GM10248 (cell line): ENCODE measurements at regions of chr19 and their contacts with region 1.

Region 1: DNA sequence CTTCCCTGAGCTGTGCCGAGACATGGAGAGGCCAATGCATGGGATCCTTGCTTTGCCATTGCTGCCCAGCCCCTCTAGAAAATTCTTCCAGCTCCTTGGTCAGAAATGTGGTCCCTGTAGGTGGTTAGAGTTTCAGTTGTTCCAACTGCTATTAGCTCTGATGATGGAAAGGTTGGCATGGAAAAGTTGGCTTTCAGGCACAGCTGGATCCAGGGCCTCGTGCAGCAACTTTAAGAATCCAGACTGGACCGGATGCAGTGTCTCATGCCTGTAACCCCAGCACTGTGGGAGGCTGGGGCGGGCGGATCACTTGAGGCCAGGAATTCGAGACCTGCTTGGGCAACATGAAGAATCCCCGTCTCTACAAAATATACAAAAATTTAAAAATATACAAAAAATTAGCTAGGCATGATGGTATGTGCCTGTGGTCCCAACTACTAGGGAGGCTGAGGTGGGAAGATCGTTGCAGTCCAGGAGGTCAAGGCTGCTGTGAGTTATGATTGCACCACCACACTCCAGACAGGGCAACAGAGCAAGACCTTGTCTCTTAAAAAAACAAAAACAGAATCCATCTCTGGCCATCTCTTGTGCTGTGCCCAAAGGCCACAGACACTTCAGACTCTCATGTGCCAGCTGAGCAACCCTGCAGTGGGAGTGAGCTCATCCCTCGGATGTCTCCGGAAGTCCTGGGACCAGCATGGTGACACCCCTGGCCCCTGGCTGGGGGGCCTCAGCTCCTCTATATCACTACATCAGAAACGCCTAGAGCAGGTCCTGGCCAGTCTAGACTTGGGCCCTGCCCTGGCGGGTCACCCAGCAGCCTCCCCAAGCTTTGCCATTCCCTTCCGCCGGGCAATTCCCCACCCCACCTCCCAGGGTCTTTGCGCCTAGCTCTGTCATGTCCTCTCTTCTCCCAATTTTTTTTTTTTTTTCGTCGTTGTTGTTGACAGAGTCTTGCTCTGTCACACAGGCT is 16.8 kb downstream of the MEX3D start:
- DNase-seq: no peak
- CTCF ChIP-seq: no peak

Region 2: DNA sequence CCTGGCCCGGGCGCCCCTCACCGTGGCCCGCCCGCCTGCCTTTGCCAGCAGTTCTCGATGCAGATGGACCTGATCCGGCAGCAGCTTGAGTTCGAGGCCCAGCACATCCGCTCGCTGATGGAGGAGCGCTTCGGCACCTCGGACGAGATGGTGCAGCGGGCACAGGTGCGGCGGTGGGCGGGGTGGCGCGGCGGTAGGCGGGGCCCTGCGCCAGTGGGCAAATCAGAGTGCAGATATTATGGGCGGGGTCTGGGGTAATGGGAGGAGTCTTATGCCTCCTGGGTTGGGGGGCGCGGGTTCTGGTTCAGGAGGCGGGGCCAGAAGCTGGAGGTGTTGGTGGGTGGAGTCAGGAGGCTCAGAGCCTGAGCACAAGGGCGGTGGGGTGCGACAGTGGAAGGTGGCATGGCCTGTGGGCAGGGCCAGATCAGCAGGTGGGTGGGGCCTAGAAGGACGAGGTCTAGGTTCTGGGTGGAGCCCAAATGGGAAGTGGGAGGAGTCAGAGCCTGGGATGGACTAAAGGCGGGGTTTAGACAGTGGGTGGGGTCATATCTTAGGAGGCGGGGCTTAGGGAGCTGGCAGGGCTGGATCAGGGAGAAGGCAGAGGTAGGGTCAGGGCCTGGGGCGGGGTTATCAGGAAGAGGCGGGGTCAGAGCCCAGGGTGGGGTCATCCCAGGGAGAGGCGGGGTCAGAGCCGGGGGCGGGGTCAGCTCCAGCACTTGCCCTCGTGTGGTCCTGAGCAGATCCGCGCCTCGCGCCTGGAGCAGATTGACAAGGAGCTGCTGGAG is 95.8 kb before region 1 on chr19:
- CTCF ChIA-PET with region 1: no interaction called
- POLR2A ChIA-PET with region 1: no interaction called
- DNase-seq: peak; percentile 79
- CTCF ChIP-seq: no peak

Region 3: DNA sequence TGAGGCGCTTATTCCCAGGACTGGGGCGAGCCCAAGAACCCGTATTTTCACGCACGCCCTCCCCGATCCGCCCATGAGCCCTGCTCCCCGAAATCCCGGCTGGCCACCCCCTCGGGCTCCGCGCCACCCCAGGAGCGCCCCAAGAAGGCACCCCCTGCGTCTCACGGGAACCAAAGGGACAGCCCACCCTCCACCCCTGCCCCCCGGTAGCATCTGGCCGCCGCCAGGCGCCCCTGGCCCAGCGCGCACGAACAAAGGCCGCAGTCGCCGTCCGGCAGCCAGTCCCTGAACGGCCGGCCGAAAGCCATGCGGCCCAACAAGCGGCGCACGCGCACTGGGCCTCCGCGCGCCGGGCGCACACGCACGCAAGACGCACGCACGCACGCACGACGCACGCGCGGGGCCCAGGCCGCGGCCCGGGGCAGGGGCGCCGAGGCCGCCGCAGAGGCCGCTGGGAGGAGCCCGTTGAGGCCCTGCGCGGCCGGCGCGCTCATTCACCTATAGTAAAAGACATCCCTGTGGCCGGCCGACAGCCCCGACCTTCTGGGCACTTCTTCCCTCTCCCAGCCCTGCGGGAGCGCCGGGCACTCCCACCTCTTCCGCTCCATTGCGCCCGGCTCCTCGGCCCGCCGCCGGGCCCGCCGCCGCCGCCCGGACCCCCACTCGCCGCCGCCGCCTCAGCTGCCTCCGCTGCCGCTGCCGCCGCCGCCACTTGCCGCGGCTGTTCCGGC is 40.8 kb after region 1 on chr19:
- CTCF ChIA-PET with region 1: interaction called, 11 read pairs
- POLR2A ChIA-PET with region 1: no interaction called
- DNase-seq: peak; percentile 97
- CTCF ChIP-seq: no peak

Region 4: GRCh38 chr19:1767464-1767933 is 216.1 kb after region 1 on chr19:
- CTCF ChIA-PET with region 1: interaction called, 17 read pairs
- POLR2A ChIA-PET with region 1: no interaction called
- DNase-seq: peak; percentile 88
- CTCF ChIP-seq: peak; percentile 98

Region 5: GRCh38 chr19:1780272-1780958 is 229.1 kb after region 1 on chr19:
- CTCF ChIA-PET with region 1: interaction called, 10 read pairs
- POLR2A ChIA-PET with region 1: no interaction called
- DNase-seq: no peak
- CTCF ChIP-seq: no peak

Region 6: GRCh38 chr19:1794424-1795172 is 243.2 kb after region 1 on chr19:
- CTCF ChIA-PET with region 1: interaction called, 20 read pairs
- POLR2A ChIA-PET with region 1: no interaction called
- DNase-seq: no peak
- CTCF ChIP-seq: no peak

Region 7: DNA sequence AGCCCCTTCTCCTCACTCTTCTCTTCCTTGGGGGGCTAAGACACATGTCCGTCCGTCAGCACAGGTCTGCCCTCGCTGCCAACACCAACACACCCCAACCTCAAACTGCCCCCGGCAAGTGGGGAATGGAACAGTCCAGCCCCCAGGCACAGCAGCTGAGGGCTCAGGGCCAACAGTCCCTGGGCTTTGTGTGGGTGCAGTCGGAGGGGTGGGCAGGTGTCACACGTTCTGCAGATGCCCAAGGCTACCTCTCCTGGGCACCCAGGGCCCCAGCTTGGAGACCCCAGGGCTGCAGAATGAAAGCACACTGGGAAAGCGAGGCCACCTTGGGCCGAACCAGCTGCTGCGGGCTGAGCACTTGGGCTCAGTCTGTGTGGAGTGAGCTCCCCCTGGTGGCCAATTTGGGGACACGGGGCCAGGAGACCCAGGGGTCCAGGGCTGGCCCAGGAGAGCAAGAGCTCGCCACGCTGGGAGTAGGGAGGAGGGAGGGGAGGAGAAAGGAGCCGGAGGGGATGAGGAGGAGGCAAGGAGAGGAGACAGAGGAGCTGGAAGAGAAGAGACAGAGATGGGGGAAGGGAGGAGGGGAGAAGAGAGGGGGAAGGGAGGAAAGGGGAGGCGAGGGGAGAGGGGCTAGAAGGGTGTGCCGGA is 274.7 kb after region 1 on chr19:
- CTCF ChIA-PET with region 1: interaction called, 13 read pairs
- POLR2A ChIA-PET with region 1: no interaction called
- DNase-seq: peak; percentile 90
- CTCF ChIP-seq: peak; percentile 96